WTC11 (cell line): ENCODE measurements at regions of chr10 and their contacts with region 1.

Region 1: GRCh38 chr10:71319042-71319799 is at the start of gene SLC29A3:
- DNase-seq: peak; percentile 85
- ATAC-seq: peak; percentile 90
- H3K4me3 Mint-ChIP-seq: peak within 1 kb of the TSS; percentile 98
- H3K27ac Mint-ChIP-seq: peak within 1 kb of the TSS; percentile 93
- H3K4me1 Mint-ChIP-seq: peaks cover 18% of the 10 kb centered on the region
- H3K27me3 Mint-ChIP-seq: no peaks in the 10 kb centered on the region
- CTCF ChIP-seq: peak; percentile 38
- total RNA-seq, gene SLC29A3: 9.2 to 11.1 TPM (median 11.0 TPM) in 3 replicates

Region 2: GRCh38 chr10:71085689-71086438 is 233.4 kb before region 1 on chr10:
- CTCF ChIA-PET with region 1: no interaction called
- POLR2A ChIA-PET with region 1: no interaction called
- DNase-seq: peak; percentile 17
- ATAC-seq: peak; percentile 80
- H3K4me3 Mint-ChIP-seq: no peak overlapping the region
- H3K27ac Mint-ChIP-seq: no peak overlapping the region
- H3K4me1 Mint-ChIP-seq: no peaks in the 10 kb centered on the region; the same call in 1 of the 2 replicates
- H3K27me3 Mint-ChIP-seq: peaks cover 4% of the 10 kb centered on the region; the same call in 1 of the 2 replicates
- CTCF ChIP-seq: no peak

Region 3: DNA sequence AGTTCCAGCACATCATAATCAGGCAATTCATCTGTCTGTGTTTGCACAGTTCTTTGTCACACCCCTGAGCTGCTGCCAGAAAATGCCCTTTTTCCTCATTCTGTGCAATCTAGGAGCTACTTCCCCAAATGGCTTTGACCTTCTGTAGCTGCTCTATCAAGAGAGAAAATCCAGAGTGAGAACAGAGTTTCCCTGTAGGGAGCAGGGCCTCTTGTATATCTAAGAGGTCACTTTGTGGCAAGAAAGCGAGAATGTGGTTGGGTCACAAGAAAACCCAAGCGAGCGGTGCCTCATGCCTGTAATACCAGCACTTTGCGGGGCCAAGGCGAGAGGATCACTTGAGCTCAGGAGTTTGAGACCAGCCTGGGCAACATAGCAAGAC is 24.2 kb after region 1 on chr10:
- CTCF ChIA-PET with region 1: interaction called, 54 read pairs
- POLR2A ChIA-PET with region 1: no interaction called
- DNase-seq: no peak
- ATAC-seq: no peak
- H3K4me3 Mint-ChIP-seq: no peak overlapping the region
- H3K27ac Mint-ChIP-seq: peak overlapping the region; percentile 89; the same call in 1 of the 2 replicates
- H3K4me1 Mint-ChIP-seq: peaks cover 68% of the 10 kb centered on the region
- H3K27me3 Mint-ChIP-seq: no peaks in the 10 kb centered on the region
- CTCF ChIP-seq: no peak

Region 4: DNA sequence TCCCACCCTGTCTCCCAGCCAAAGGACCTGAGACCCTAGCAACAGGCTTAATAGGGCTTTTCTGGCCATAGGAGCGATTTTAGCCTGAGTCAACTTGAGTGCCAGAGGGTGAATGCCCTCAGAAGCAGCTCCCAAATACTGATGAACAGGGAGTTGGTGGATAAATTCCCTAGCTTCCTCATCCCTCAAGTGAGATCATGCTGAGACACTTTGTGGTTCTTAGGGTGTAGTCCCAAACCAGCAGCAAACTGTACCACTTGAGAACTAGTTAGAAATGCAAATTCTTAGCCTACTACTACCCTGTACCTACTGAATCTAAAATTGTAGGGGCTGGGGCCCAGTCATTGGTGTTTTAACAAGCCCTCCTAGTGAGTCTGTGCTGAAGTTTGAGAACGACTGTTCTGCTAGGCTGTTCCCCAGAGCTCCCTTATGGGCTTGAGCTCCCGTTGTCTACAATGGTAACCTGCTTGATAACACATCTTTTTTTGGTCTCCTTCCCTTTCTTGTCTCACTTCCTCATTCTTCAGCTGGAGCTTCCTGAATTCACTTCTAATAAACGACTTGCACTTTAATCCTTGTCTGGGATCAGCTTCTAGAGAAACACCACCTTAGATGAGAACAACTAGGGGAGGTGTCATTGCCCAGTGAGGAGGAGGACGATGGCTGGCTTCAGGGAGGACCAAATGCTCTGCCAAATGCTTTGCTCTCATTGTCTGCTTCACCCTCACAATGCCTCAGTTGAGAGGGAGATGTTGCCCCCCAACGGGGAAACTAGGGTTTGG is 59.3 kb after region 1 on chr10:
- CTCF ChIA-PET with region 1: interaction called, 107 read pairs
- POLR2A ChIA-PET with region 1: no interaction called
- DNase-seq: no peak
- ATAC-seq: no peak
- H3K4me3 Mint-ChIP-seq: no peak overlapping the region
- H3K27ac Mint-ChIP-seq: no peak overlapping the region
- H3K4me1 Mint-ChIP-seq: peaks cover 5% of the 10 kb centered on the region
- H3K27me3 Mint-ChIP-seq: peaks cover 6% of the 10 kb centered on the region; the same call in 1 of the 2 replicates
- CTCF ChIP-seq: no peak

Region 5: DNA sequence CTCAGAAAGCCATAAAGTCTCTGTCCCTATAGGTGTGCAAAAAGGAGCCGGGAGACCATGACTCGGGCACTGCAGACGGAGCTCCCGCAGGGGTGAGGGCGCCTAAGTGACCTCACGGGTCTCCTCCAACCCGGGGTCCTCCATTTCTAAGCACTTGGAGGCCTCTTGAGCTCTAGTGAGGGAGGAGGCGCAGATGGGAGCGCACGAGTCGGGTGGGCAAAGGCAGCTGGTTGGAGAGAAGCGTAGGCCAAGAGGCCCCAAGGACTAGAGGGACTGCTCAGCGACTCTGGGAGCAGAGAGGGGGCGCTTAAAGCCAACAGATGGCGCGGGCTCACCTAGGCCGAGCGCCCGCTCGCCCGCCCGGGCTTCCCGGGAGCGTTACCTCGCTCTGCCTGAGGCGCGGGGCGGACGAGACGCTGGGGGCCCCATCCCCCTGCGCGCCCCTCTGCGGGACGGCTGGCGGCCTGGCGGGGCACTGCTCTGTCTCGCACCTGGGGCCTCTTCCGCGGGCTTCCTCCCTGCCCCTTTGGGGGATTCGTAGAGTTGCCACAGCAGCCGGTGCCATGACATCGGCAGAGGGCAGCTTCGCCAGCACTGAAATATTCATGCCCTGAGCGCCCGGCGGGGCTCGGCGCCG is 77.0 kb after region 1 on chr10:
- CTCF ChIA-PET with region 1: interaction called, 120 read pairs
- POLR2A ChIA-PET with region 1: no interaction called
- DNase-seq: peak; percentile 76
- ATAC-seq: peak; percentile 86
- H3K4me3 Mint-ChIP-seq: peak overlapping the region; percentile 63
- H3K27ac Mint-ChIP-seq: no peak overlapping the region
- H3K4me1 Mint-ChIP-seq: peaks cover 20% of the 10 kb centered on the region
- H3K27me3 Mint-ChIP-seq: peaks cover 59% of the 10 kb centered on the region
- CTCF ChIP-seq: no peak

Region 6: DNA sequence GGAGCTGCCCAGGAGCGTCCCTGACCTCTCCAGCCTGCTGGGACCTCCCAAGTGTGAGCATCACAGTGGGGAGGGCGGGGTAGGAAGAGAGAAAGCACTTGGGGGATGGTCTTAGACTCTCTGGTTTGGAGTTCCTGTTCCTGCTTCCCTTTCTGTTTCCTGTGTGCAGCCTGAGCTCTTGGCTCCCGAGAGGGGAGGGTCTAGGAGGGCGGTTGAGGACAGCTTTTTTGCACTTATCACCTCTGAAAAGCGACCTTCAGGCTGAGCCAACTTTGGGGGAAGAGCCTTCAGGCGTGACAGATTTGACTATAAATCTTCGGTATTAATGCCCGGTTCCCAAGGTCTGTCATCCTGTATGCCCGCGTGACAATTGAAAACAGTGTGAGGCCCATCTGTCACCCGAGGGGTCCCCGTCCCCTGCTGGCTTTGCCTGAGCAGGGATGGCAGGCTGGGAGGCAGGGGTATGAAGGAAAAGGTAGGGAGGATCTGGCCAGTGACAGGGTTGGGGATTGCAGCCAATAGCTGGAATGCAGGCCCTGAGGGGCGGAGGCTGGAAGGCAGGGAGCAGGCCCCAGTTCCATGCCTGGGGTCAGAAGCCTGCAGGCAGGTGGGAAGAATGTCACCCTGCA is 156.1 kb after region 1 on chr10:
- CTCF ChIA-PET with region 1: interaction called, 32 read pairs
- POLR2A ChIA-PET with region 1: no interaction called
- DNase-seq: peak; percentile 50
- ATAC-seq: peak; percentile 92
- H3K4me3 Mint-ChIP-seq: no peak overlapping the region
- H3K27ac Mint-ChIP-seq: 0 out of 2 replicates have a peak overlapping the region, but pooled peaks have one; percentile 20
- H3K4me1 Mint-ChIP-seq: peaks cover 10% of the 10 kb centered on the region
- H3K27me3 Mint-ChIP-seq: no peaks in the 10 kb centered on the region
- CTCF ChIP-seq: no peak

Region 7: GRCh38 chr10:71713135-71714030 is 394.2 kb after region 1 on chr10:
- CTCF ChIA-PET with region 1: interaction called, 78 read pairs
- POLR2A ChIA-PET with region 1: no interaction called
- DNase-seq: no peak
- ATAC-seq: peak; percentile 59
- H3K4me3 Mint-ChIP-seq: no peak overlapping the region
- H3K27ac Mint-ChIP-seq: peak overlapping the region; percentile 49
- H3K4me1 Mint-ChIP-seq: peaks cover 11% of the 10 kb centered on the region
- H3K27me3 Mint-ChIP-seq: no peaks in the 10 kb centered on the region; the same call in 1 of the 2 replicates
- CTCF ChIP-seq: no peak